ENCODE measurements at regions of chr16 and their contacts with region 1.

Region 1: GRCh38 chr16:84277237-84277823 is 17.3 kb upstream of the WFDC1 start:
- DNase-seq: no peak
- ATAC-seq: peak; percentile 92
- H3K4me3 ChIP-seq: no peak overlapping the region
- H3K27ac ChIP-seq: no peak overlapping the region
- H3K4me1 ChIP-seq: no peaks in the 10 kb centered on the region
- H3K27me3 ChIP-seq: peaks cover 0 to 2% of the 10 kb centered on the region in 2 experiments; a peak in 2 of 4 replicates
- CTCF ChIP-seq: peak; percentile 69 to 82 (median 72)
- EP300 ChIP-seq: no peak
- POLR2A ChIP-seq: no peak
- RAD21 ChIP-seq: peak; percentile 69

Region 2: GRCh38 chr16:84484579-84485254 is 207.4 kb after region 1 on chr16:
- CTCF ChIA-PET with region 1: interaction called, 4 read pairs
- POLR2A ChIA-PET with region 1: no interaction called
- RAD21 ChIA-PET with region 1: interaction called, 5 read pairs
- SMC1A ChIA-PET with region 1: interaction called, 3 read pairs
- in situ Hi-C with region 1: no loop called
- intact Hi-C with region 1: loop called (anchors 2 kb)
- DNase-seq: no peak
- ATAC-seq: peak; percentile 40; the same call in 2 of the 3 replicates
- H3K4me3 ChIP-seq: no peak overlapping the region
- H3K27ac ChIP-seq: no peak overlapping the region
- H3K4me1 ChIP-seq: no peaks in the 10 kb centered on the region
- H3K27me3 ChIP-seq: no peaks in the 10 kb centered on the region
- CTCF ChIP-seq: peak; percentile 53 to 56 (median 55); a peak in 4 of 6 replicates
- EP300 ChIP-seq: no peak
- POLR2A ChIP-seq: no peak
- RAD21 ChIP-seq: peak; percentile 70

Region 3: GRCh38 chr16:84629580-84629979 is 352.2 kb after region 1 on chr16:
- CTCF ChIA-PET with region 1: no interaction called
- POLR2A ChIA-PET with region 1: no interaction called
- RAD21 ChIA-PET with region 1: no interaction called
- SMC1A ChIA-PET with region 1: no interaction called
- in situ Hi-C with region 1: loop called (anchors 10 kb)
- intact Hi-C with region 1: no loop called
- DNase-seq: no peak
- ATAC-seq: no peak
- H3K4me3 ChIP-seq: no peak overlapping the region
- H3K27ac ChIP-seq: no peak overlapping the region
- H3K4me1 ChIP-seq: peaks cover 29% of the 10 kb centered on the region
- H3K27me3 ChIP-seq: no peaks in the 10 kb centered on the region
- CTCF ChIP-seq: no peak
- EP300 ChIP-seq: no peak
- POLR2A ChIP-seq: no peak
- RAD21 ChIP-seq: no peak

Measured in GM12878 (cell line).